ENCODE measurements at regions of chr6 and their contacts with region 1.

Region 1: GRCh38 chr6:39102071-39102820 is 12.7 kb downstream of the SAYSD1 start:
- DNase-seq: peak; percentile 43
- ATAC-seq: peak; percentile 99
- H3K4me3 ChIP-seq: no peak overlapping the region
- H3K27ac ChIP-seq: no peak overlapping the region
- H3K4me1 ChIP-seq: no peaks in the 10 kb centered on the region
- H3K27me3 ChIP-seq: no peaks in the 10 kb centered on the region
- CTCF ChIP-seq: peak; percentile 70
- EP300 ChIP-seq: no peak
- POLR2A ChIP-seq: no peak
- RAD21 ChIP-seq: peak; percentile 61

Region 2: DNA sequence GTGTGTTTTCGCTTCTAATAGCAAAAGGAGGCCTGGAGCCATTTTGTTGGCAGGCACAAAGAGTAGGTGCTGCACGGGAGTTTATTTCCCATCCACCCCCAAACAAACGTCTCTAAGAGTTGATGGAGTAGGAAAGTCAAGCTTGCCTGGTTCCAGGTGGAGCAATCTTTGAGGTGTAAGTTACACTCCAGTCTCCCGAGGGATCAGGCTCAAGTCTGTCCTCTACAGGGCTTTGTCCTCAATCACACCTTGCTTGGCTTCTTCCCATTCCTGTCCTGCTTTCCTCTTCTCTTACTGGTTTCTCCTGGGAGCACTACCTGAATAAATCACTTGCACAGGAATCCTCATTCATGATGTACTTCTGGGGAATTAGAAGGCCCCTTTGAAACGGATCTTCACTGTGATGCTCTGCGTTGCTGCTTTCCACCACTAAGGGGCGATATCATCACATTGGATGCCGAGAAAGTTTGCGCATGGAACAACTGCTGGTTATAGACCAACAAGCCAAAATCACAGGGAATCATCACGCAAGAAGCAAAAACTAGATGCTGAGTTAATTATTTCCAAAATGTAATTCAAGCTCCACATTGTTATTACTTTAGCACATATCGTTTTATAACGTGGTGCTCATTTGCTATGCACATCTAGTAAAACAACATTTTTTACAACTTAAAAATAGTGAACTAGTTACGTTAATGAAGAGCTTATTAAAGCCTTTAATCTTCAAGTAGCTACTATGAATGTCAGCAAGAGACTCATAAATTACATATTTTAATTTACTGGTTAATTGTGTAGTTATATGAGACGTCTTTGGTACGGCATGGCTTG is 230.3 kb before region 1 on chr6:
- CTCF ChIA-PET with region 1: interaction called, 22 read pairs
- POLR2A ChIA-PET with region 1: no interaction called
- in situ Hi-C with region 1: loop called (anchors 10 kb)
- intact Hi-C with region 1: no loop called
- DNase-seq: peak; percentile 41
- ATAC-seq: peak; percentile 80
- H3K4me3 ChIP-seq: no peak overlapping the region
- H3K27ac ChIP-seq: no peak overlapping the region
- H3K4me1 ChIP-seq: no peaks in the 10 kb centered on the region
- H3K27me3 ChIP-seq: no peaks in the 10 kb centered on the region
- CTCF ChIP-seq: peak; percentile 92
- EP300 ChIP-seq: no peak
- POLR2A ChIP-seq: no peak
- RAD21 ChIP-seq: peak; percentile 69

Region 3: GRCh38 chr6:38973178-38974054 is 128.8 kb before region 1 on chr6:
- CTCF ChIA-PET with region 1: interaction called, 4 read pairs
- POLR2A ChIA-PET with region 1: no interaction called
- in situ Hi-C with region 1: no loop called
- intact Hi-C with region 1: loop called (anchors 10 kb)
- DNase-seq: peak; percentile 72
- ATAC-seq: peak; percentile 96
- H3K4me3 ChIP-seq: no peak overlapping the region
- H3K27ac ChIP-seq: no peak overlapping the region
- H3K4me1 ChIP-seq: no peaks in the 10 kb centered on the region
- H3K27me3 ChIP-seq: no peaks in the 10 kb centered on the region
- CTCF ChIP-seq: peak; percentile 62
- EP300 ChIP-seq: no peak
- POLR2A ChIP-seq: no peak
- RAD21 ChIP-seq: no peak

Region 4: DNA sequence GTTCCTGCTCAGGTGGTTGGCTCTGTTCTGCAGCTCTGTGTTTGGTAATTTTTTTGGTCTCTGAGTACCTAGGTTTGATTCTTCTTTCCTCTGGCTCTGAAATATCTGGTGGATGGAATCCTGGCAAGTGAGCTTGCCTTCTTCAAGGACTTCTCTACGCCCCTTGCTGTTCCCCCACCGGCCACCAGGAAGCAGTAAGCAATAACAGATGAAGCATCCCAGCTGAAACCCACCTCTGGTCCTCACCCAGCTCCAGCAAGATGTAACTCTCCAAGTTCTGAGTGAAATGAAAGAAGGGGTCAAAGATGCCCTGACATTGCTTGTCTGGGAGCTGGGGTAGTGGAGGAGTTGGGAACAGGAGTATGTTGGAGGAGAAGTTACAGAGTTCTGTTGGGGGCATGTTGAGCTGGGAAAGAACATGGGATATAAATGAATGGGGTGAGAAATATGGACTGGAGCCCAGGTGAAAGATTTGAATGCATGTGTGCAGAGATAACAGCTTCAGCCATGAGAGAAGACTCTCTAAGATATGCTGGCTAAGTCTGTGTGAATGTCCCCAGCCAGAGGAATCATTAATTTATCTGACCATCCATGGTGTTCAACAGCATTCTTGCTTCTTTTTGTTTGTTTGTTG is 105.0 kb before region 1 on chr6:
- CTCF ChIA-PET with region 1: no interaction called
- POLR2A ChIA-PET with region 1: no interaction called
- in situ Hi-C with region 1: no loop called
- intact Hi-C with region 1: loop called (anchors 1 kb)
- DNase-seq: peak; percentile 29
- ATAC-seq: peak; percentile 77
- H3K4me3 ChIP-seq: no peak overlapping the region
- H3K27ac ChIP-seq: no peak overlapping the region
- H3K4me1 ChIP-seq: no peaks in the 10 kb centered on the region
- H3K27me3 ChIP-seq: no peaks in the 10 kb centered on the region; a peak in 1 of 5 replicates
- CTCF ChIP-seq: peak; percentile 66
- EP300 ChIP-seq: no peak
- POLR2A ChIP-seq: no peak
- RAD21 ChIP-seq: 0 out of 2 replicates have a peak, but pooled peaks have one; percentile 37

Region 5: GRCh38 chr6:39029156-39030011 is 72.9 kb before region 1 on chr6:
- CTCF ChIA-PET with region 1: no interaction called
- POLR2A ChIA-PET with region 1: no interaction called
- in situ Hi-C with region 1: no loop called
- intact Hi-C with region 1: loop called (anchors 10 kb)
- DNase-seq: peak; percentile 22
- ATAC-seq: peak; percentile 100
- H3K4me3 ChIP-seq: no peak overlapping the region
- H3K27ac ChIP-seq: no peak overlapping the region
- H3K4me1 ChIP-seq: no peaks in the 10 kb centered on the region
- H3K27me3 ChIP-seq: peaks cover 2 to 3% of the 10 kb centered on the region in 2 experiments; a peak in 1 of 5 replicates
- CTCF ChIP-seq: peak; percentile 74
- EP300 ChIP-seq: no peak
- POLR2A ChIP-seq: no peak
- RAD21 ChIP-seq: no peak

Region 6: DNA sequence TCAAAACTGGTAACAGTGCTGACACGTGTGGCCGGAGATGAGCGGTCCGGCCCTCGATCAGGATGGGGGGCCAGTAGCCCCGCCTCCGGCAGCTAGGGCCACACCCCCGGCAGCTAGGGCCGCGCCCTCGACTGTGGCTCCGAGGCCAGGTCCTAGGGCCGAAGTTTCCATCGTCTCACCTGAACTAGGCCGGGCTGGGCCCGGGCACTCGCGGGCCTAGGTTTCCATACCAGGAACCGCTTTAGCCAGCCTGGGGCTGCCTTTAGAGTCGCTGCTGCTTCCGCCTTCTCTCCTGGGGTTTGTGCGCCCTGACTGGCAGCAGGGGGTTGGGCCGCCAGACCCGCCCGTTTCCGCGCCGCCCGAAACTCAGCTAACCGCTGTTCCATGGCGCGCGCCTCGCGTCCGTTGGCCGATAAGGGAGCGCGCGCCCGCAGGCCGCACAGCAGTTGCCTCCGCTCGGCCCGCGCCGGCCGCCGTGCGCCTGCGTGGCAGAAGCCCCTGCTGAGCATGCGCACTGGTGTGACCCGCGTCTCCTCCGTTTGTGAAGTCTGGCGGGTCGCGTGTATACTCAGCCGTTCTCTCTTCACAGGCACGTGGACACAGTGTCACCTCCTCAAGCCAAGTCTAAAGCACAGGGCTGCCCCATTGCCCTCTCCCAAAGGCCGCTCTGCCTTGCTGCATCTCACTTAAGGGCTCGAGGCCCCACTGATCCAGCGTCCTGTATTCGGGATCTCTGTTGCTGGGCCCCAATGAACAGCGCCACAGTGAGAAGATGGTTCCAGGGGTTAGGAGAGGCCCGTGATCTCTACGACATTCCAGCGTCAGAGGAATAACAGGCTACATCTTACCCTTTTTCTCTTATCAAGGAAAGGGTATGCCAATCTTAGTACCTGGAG is 12.7 kb after region 1 on chr6 and contains the start of gene SAYSD1:
- CTCF ChIA-PET with region 1: no interaction called
- POLR2A ChIA-PET with region 1: interaction called, 13 read pairs
- in situ Hi-C with region 1: no loop called
- intact Hi-C with region 1: no loop called
- DNase-seq: peak; percentile 89
- ATAC-seq: peak; percentile 96
- H3K4me3 ChIP-seq: peak within 1 kb of the TSS; percentile 61 to 77 (median 74)
- H3K27ac ChIP-seq: peak within 1 kb of the TSS; percentile 80
- H3K4me1 ChIP-seq: peaks cover 26% of the 10 kb centered on the region
- H3K27me3 ChIP-seq: no peaks in the 10 kb centered on the region; a peak in 1 of 5 replicates
- CTCF ChIP-seq: 0 out of 2 replicates have a peak, but pooled peaks have one; percentile 26
- EP300 ChIP-seq: 0 out of 4 replicates have a peak, but pooled peaks of 1 of the 2 experiments have one; percentile 38
- POLR2A ChIP-seq: peak; percentile 78 to 80
- RAD21 ChIP-seq: peak; percentile 46; the same call in 1 of the 2 replicates
- total RNA-seq, gene SAYSD1: 16.0 and 18.7 TPM in 2 replicates

Region 7: GRCh38 chr6:39153766-39154397 is 51.6 kb after region 1 on chr6:
- CTCF ChIA-PET with region 1: no interaction called
- POLR2A ChIA-PET with region 1: no interaction called
- in situ Hi-C with region 1: no loop called
- intact Hi-C with region 1: no loop called
- DNase-seq: no peak
- ATAC-seq: no peak
- H3K4me3 ChIP-seq: no peak overlapping the region
- H3K27ac ChIP-seq: no peak overlapping the region
- H3K4me1 ChIP-seq: no peaks in the 10 kb centered on the region
- H3K27me3 ChIP-seq: 0 out of 5 replicates have a peak, but pooled peaks cover 0 to 5% of the 10 kb centered on the region in 2 experiments
- CTCF ChIP-seq: no peak
- EP300 ChIP-seq: no peak
- POLR2A ChIP-seq: no peak
- RAD21 ChIP-seq: no peak